ENCODE measurements at regions of chrX and their contacts with region 1.

Region 1: DNA sequence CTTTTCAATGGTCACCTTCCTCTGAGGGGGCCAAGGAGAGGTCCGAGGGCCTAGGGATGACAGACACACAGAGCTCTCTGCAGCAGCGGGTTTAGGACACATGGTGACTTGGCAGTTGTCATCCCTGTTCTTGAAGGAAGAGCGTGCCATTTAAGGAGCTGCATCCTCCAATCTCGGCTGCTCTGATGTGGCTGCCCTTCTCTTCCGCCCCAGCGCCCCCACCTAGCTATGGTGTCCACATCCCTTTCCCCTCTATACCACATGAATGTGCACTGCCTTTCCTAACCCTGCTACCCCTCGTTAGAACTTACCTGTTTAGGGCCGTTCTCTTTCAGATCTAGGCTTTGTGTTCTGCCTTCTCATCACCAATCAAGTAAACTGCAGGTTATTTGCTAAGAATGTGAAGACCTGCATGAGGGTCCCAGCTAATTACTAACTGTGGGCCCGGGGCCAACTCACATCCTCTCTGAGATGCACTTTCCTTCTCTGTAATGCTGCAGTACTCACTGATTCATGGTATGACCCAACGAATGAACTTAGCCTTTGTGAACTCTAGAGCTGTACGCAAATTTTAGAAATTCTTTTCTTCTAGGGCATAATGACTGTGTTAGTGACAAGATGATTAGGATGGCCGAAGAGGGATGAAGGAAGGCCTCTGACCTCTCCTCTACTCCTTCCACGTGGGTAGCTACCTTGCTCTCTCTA is 38.2 kb downstream of the CHST7 start:
- DNase-seq: peak; percentile 53
- H3K4me3 Mint-ChIP-seq: peak overlapping the region; percentile 34
- H3K27ac Mint-ChIP-seq: peak overlapping the region; percentile 86
- H3K4me1 Mint-ChIP-seq: peaks cover 66% of the 10 kb centered on the region
- H3K27me3 Mint-ChIP-seq: no peaks in the 10 kb centered on the region

Region 2: GRCh38 chrX:46588263-46588662 is 23.5 kb before region 1 on chrX:
- CTCF ChIA-PET with region 1: interaction called, 3 read pairs
- POLR2A ChIA-PET with region 1: interaction called, 18 read pairs
- DNase-seq: peak; percentile 53
- H3K4me3 Mint-ChIP-seq: peak overlapping the region; percentile 59
- H3K27ac Mint-ChIP-seq: peak overlapping the region; percentile 84
- H3K4me1 Mint-ChIP-seq: peaks cover 44% of the 10 kb centered on the region
- H3K27me3 Mint-ChIP-seq: no peaks in the 10 kb centered on the region

Region 3: DNA sequence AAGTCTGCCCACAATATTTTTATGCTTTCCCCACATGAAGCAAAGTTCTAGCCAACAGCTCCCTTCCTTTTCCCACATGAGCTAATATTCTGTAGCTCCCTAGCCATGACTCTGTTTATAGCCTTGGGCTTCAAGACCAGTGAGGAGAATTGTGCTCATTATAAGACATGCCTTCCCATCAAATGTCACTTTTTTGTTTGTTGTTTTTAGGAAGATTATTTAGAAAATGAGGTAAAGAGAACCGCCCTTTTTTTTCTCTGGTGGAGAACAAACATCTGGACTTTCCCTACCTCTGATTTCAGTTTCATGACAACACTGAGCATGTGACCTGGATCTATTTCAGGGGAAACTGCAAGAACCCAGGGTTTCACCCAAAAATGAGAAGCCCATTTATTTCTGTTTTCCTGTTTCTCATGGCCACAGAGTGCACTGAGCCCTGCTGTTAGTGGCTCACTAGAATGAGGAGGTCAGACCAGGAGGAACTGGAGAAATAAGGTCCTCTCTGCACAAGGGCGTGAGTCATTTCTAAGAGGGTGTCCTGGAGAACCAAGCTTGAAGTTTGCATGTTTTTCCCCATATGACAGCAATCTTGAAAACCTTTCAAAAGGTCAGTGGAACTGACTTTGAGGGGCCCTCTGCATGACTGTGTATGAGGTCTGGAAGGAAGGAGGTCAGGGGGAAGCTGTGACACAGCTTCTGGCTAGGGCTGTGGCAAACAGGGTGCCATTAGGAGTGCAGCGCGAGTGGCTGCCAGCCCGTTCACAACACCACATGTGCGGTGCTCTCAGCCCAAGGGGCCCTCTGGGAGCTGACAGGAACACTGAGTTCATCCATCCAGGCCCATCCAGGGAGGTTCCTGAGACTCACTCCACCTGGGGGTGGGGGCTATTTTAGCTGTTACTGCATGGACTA is 16.9 kb after region 1 on chrX:
- CTCF ChIA-PET with region 1: no interaction called
- POLR2A ChIA-PET with region 1: interaction called, 19 read pairs
- DNase-seq: no peak
- H3K4me3 Mint-ChIP-seq: no peak overlapping the region
- H3K27ac Mint-ChIP-seq: peak overlapping the region; percentile 80
- H3K4me1 Mint-ChIP-seq: peaks cover 48% of the 10 kb centered on the region
- H3K27me3 Mint-ChIP-seq: no peaks in the 10 kb centered on the region

Region 4: GRCh38 chrX:46727441-46727840 is 115.6 kb after region 1 on chrX:
- CTCF ChIA-PET with region 1: no interaction called
- POLR2A ChIA-PET with region 1: no interaction called
- DNase-seq: no peak
- H3K4me3 Mint-ChIP-seq: no peak overlapping the region
- H3K27ac Mint-ChIP-seq: no peak overlapping the region
- H3K4me1 Mint-ChIP-seq: peaks cover 14% of the 10 kb centered on the region
- H3K27me3 Mint-ChIP-seq: no peaks in the 10 kb centered on the region